ENCODE measurements at regions of chr16 and their contacts with region 1.

Region 1: GRCh38 chr16:53503270-53503923 is 388 bp upstream of the AKTIP start:
- DNase-seq: peak; percentile 97
- ATAC-seq: peak; percentile 92
- H3K4me3 Mint-ChIP-seq: peak overlapping the region; percentile 88
- H3K27ac Mint-ChIP-seq: peak overlapping the region; percentile 90
- H3K4me1 Mint-ChIP-seq: peaks cover 30% of the 10 kb centered on the region
- H3K27me3 Mint-ChIP-seq: no peaks in the 10 kb centered on the region
- CTCF ChIP-seq: no peak

Region 2: DNA sequence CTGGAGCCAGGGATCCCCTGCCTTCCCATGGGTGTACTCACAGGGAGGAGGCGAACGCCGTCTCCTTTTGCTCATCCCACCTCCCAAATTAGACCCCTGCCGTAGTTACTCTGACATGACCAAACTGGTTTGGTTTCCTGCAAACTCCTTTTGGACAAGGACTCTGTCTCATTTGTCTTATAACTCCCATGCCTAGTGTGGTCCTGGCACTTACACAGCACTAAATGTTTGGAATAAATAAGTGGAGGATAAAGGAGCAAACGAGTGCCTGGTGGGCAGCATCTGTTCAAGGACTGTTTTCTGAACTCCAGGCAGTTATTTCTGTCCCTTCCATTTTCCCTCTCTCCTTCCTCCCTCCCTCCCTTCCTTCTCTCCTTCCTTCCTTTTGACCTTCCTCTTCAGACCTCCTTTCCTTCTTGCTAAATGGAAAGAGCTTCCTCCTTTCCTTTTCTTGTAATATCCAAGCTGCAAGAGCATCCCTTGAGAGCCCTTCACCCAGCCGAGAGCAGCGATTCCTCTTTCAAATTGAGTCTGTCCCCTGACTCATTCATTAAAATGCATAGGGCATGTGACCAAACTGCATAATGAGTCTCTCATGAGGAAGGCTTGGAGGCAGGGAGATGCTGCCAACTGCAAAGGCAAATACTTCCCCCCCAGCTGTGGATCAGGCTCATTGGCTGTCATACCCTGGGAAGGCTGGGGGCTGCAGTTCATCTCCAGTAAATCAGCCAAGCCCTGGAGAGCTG is 411.8 kb before region 1 on chr16:
- CTCF ChIA-PET with region 1: no interaction called
- POLR2A ChIA-PET with region 1: no interaction called
- intact Hi-C with region 1: loop called (anchors 1 kb)
- DNase-seq: peak; percentile 26
- ATAC-seq: peak; percentile 79
- H3K4me3 Mint-ChIP-seq: peak overlapping the region; percentile 79
- H3K27ac Mint-ChIP-seq: peak overlapping the region; percentile 87
- H3K4me1 Mint-ChIP-seq: peaks cover 77% of the 10 kb centered on the region
- H3K27me3 Mint-ChIP-seq: no peaks in the 10 kb centered on the region
- CTCF ChIP-seq: no peak

Region 3: DNA sequence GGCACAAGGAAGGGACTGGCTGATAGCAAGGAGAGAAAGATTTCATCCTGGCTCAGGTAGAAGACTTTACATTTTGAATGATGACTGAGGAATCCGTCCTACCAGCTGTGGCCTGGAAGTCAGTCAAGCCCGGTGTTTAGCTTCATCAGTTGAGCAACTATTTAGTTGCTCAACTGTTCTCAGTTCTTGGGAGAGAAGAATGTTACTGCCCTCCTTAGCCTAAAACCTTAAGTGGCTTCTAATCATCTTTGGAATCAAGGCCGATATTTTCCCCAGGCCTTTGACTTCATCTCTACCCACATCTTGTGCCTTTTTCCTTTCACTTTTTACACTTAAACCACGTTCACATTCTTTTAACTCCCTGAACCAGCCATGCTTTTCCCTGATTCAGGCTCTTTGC is 86.4 kb before region 1 on chr16:
- CTCF ChIA-PET with region 1: no interaction called
- POLR2A ChIA-PET with region 1: no interaction called
- intact Hi-C with region 1: no loop called
- DNase-seq: no peak
- ATAC-seq: no peak
- H3K4me3 Mint-ChIP-seq: no peak overlapping the region
- H3K27ac Mint-ChIP-seq: no peak overlapping the region
- H3K4me1 Mint-ChIP-seq: no peaks in the 10 kb centered on the region
- H3K27me3 Mint-ChIP-seq: peaks cover 14% of the 10 kb centered on the region
- CTCF ChIP-seq: no peak

Region 4: DNA sequence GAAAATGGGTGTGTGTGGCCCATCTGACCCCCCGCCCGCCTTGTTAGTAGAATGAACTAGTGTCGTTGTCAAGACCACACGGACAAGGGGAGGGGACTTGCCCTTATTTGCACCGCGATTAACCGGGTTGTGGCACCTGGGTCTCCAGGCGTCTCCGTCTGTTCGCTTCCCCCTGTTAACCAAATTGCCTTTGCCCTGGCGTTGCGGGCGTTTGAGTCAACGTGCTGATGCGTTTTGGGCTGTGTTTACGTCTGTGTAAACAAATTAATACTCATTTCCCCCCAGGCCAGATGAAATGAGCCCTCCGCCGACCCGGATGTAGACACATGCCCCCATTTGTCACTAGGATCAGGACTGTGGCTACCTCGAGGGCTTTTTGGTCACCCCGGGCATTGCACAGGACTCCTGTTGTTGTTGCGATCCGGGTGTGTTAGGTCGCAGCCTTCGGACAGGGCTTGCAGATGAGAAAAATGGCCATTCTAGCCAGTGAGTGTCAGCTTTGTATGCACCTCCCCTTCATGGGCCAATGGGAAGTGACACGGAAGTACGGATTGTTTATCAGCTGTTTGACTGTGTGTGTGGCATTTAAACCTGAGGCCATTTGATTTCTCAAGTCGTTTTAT is 68.2 kb before region 1 on chr16:
- CTCF ChIA-PET with region 1: interaction called, 5 read pairs
- POLR2A ChIA-PET with region 1: interaction called, 28 read pairs
- intact Hi-C with region 1: loop called (anchors 1 kb)
- DNase-seq: peak; percentile 52
- ATAC-seq: peak; percentile 67
- H3K4me3 Mint-ChIP-seq: peak overlapping the region; percentile 89
- H3K27ac Mint-ChIP-seq: peak overlapping the region; percentile 93
- H3K4me1 Mint-ChIP-seq: peaks cover 34% of the 10 kb centered on the region
- H3K27me3 Mint-ChIP-seq: no peaks in the 10 kb centered on the region
- CTCF ChIP-seq: no peak

Region 5: DNA sequence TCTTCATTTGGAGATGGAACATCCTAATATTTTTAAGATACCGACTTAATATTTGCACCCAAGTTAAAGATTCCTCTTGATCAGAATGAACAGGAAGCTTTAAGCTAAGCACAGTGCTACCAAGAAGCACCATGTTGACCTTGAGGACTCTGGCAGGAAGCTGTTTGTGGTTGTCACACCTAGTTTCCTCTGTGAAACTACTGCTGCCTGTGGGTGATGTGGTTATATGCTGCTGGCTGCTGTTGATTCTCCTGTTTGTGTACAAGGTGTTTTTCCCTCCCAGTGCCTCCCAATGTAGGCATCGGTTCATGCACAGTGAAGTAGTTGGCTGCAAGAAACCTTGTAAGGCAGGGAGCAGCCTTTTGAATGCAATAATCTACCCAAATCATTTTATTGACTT is 45.7 kb before region 1 on chr16:
- CTCF ChIA-PET with region 1: no interaction called
- POLR2A ChIA-PET with region 1: no interaction called
- intact Hi-C with region 1: no loop called
- DNase-seq: no peak
- ATAC-seq: peak; percentile 92
- H3K4me3 Mint-ChIP-seq: peak overlapping the region; percentile 50
- H3K27ac Mint-ChIP-seq: peak overlapping the region; percentile 57
- H3K4me1 Mint-ChIP-seq: peaks cover 28% of the 10 kb centered on the region
- H3K27me3 Mint-ChIP-seq: no peaks in the 10 kb centered on the region
- CTCF ChIP-seq: no peak

Region 6: DNA sequence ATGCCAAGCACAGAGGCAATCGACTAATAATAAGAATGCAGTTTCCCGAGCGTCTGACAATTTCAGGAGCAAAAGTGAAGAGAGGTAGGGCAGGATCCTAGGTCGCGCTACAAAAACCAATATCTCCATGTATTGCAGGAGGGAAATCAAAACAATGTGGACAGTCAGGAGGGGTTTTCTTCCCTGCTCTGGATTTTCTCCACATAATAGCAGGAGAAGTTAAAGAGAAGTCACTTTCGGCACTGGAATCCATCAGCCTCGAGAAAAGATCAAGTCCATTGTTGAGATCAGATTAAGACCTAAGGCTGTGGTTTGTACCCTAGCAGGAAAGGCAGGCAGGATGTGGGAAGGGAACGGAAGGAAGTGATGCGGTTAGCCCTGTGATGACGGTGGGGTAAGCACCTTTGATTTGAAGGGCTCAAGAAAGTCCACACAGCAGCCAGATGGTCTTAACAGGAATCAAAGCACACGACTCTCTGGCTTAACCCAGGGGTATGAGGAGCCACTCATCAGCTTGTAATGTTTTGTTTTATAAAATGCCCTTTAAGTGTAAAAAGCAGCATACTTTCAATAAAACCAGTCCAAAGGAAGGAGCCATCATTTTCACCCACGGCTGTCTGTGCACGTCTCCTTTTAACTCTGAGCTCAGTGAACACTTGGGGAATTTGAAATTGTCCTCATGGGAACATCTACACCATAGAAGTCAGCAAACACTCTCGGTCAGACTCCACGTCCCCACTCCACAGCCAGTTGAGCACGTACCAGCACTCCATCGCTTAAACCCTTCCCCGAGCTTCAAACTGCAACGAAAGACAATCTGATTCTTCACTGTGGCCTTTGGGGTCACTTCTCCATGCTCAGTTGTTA is 15.4 kb after region 1 on chr16:
- CTCF ChIA-PET with region 1: no interaction called
- POLR2A ChIA-PET with region 1: interaction called, 56 read pairs
- intact Hi-C with region 1: loop called (anchors 1 kb)
- DNase-seq: peak; percentile 46
- ATAC-seq: peak; percentile 90
- H3K4me3 Mint-ChIP-seq: peak overlapping the region; percentile 70
- H3K27ac Mint-ChIP-seq: peak overlapping the region; percentile 87
- H3K4me1 Mint-ChIP-seq: peaks cover 50% of the 10 kb centered on the region
- H3K27me3 Mint-ChIP-seq: no peaks in the 10 kb centered on the region
- CTCF ChIP-seq: no peak

Region 7: DNA sequence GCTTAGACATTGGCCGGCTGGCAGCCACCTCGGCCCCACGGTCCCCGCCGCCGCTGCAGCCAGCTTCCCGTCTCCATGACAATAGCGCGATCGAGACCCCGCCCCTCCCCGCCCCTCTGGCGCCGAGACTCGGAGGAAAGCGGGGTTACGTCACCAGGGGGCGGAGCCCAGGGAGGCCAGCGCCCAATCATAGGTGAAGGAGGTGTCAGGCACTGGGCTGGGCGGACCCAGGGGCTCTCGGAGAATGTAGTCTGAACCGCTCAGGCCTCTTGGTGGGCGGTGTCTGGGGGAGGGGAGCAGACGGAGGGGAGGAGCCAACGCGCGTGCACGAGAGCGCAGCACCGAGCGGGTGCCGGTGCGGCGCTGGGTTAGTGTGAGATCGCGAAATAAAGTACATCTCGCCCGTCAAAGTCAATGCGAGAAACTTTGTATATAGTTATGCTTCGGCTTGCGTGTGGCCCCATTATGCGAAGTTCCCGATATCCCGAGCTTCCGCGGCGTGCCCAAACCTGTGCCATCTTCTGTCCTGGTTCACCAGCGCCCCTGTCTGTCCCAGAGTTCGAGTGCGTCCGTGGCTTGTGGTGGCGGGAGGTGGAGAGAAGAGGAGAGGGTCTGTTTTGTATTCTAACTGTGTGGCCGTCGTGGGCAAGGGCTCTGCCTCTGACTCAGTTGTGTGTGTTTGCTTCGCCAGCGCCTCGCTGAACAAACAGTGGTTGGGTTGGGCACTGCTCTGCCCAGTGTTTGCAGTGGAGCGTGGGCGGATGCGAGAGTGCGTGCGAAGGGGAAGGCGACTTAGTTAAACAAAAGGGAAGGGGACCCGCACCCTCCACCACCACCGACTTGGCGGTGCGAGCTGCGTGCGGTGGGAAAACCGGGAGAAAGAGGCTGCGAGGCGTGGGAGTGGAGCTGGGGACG is 1426.0 kb after region 1 on chr16:
- CTCF ChIA-PET with region 1: no interaction called
- POLR2A ChIA-PET with region 1: no interaction called
- intact Hi-C with region 1: loop called (anchors 2 kb)
- DNase-seq: peak; percentile 89
- ATAC-seq: peak; percentile 95
- H3K4me3 Mint-ChIP-seq: peak overlapping the region; percentile 88
- H3K27ac Mint-ChIP-seq: peak overlapping the region; percentile 43
- H3K4me1 Mint-ChIP-seq: peaks cover 31% of the 10 kb centered on the region
- H3K27me3 Mint-ChIP-seq: peaks cover 53% of the 10 kb centered on the region
- CTCF ChIP-seq: no peak

Measured in activated B cell treated with CpG ODN at 0.5 μM for 24 hours (primary cell).